ENCODE measurements at regions of chr13 and their contacts with region 1.

Region 1: DNA sequence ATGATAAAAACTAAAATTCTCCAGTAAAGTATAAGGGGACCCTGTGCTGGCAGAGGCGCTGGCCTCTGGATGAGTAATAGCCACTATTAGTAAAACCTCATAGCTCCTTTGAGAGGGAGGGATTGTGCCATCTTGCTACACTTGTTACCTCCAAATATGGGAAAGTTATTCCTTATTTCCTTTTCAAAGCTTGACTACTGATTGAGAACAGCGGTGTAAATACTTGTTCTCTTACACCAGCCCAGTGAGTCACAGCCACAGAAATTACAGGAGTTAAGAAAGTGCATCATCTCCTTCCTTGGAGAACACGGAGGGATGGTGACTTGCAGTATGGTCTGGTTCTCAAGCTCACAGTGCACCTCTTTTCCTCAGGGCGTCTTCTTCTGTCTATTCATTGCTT is 379.0 kb downstream of the EFNB2 start:
- DNase-seq: peak; percentile 52 to 99
- H3K4me3 ChIP-seq: 0 out of 2 replicates have a peak overlapping the region, but pooled peaks have one; percentile 1
- H3K27ac ChIP-seq: peak overlapping the region; percentile 96
- H3K4me1 ChIP-seq: peaks cover 43% of the 10 kb centered on the region
- H3K27me3 ChIP-seq: no peaks in the 10 kb centered on the region
- CTCF ChIP-seq: no peak

Region 2: GRCh38 chr13:106047859-106048258 is 108.6 kb before region 1 on chr13:
- CTCF ChIA-PET with region 1: no interaction called
- POLR2A ChIA-PET with region 1: no interaction called
- intact Hi-C with region 1: no loop called
- DNase-seq: no peak
- H3K4me3 ChIP-seq: no peak overlapping the region
- H3K27ac ChIP-seq: no peak overlapping the region
- H3K4me1 ChIP-seq: no peaks in the 10 kb centered on the region
- H3K27me3 ChIP-seq: no peaks in the 10 kb centered on the region
- CTCF ChIP-seq: no peak

Region 3: DNA sequence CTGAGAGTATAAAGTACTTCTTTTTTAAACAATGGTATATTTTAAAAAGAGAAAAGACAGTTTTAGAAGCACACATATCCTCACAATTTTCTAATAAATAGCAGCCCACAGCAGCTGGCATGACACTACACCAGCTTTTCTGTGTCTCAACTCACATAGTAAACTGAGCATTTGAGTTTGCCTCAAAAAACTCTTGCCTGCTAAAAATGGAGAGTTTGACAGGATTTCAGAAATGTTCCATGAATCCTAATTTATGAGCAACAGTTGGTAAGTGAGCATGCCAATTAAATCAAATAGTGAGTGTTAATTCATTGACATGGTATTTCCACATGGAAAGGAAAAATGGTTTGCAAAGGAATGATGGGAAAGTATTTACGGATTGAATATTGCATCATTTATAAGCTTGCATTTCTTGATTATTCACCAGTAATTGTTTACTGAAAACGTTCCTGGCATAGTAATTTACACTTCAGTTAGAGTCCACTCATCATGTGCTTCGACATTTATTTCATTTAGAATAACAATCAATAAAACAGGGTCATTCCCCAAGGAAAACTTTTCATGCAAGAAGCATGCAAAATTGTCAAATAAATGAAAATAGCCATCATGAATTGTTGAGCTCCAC is 56.0 kb after region 1 on chr13:
- CTCF ChIA-PET with region 1: no interaction called
- POLR2A ChIA-PET with region 1: no interaction called
- intact Hi-C with region 1: no loop called
- DNase-seq: no peak
- H3K4me3 ChIP-seq: no peak overlapping the region
- H3K27ac ChIP-seq: no peak overlapping the region
- H3K4me1 ChIP-seq: no peaks in the 10 kb centered on the region
- H3K27me3 ChIP-seq: no peaks in the 10 kb centered on the region
- CTCF ChIP-seq: no peak

Region 4: DNA sequence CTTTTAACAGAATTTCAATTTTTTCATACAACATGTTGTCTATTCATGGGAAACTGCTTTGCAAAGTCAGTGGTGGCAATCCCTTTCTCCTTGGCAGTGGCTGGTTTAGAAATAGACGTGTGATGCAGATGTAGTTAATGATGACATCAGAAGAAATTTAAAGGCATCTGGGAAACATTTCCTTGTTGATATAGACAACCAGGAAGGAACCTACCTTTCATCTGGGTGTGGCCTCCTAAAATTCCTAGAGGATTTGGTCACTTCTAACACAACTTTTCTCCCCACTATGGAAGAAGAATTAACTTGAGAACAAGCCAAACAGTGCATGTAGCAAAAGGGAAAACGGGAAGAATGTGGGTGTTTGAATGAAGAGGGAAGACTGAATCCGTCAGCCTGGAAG is 276.2 kb after region 1 on chr13:
- CTCF ChIA-PET with region 1: no interaction called
- POLR2A ChIA-PET with region 1: no interaction called
- intact Hi-C with region 1: loop called (anchors 2 kb)
- DNase-seq: peak; percentile 19 to 97
- H3K4me3 ChIP-seq: peak overlapping the region; percentile 1; the same call in 1 of the 2 replicates
- H3K27ac ChIP-seq: peak overlapping the region; percentile 92
- H3K4me1 ChIP-seq: peaks cover 21% of the 10 kb centered on the region
- H3K27me3 ChIP-seq: no peaks in the 10 kb centered on the region
- CTCF ChIP-seq: no peak

Region 5: DNA sequence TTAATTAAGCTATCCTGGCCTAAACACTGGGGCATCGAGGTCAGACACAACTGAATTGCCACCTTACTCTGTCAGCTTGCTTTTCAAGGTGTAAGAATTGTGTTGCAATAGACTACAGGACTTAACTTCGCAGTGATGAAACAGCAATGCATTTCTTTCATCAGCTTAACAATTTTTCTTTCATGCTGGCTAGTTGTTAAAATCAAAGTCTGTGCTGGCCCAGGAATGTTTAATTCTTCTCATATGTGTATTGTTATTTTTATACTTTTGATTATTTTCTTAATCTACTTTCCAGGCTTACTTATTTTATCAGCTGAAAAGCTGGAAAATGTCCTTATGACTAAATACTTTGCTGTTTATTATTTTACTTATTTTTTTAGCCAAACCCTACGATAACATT is 299.3 kb after region 1 on chr13:
- CTCF ChIA-PET with region 1: no interaction called
- POLR2A ChIA-PET with region 1: interaction called, 27 read pairs
- intact Hi-C with region 1: no loop called
- DNase-seq: no peak
- H3K4me3 ChIP-seq: no peak overlapping the region
- H3K27ac ChIP-seq: no peak overlapping the region
- H3K4me1 ChIP-seq: no peaks in the 10 kb centered on the region
- H3K27me3 ChIP-seq: no peaks in the 10 kb centered on the region
- CTCF ChIP-seq: no peak

Measured in PC-9 (cell line).